GM12878 (cell line): ENCODE measurements at regions of chr6 and their contacts with region 1.

Region 1: DNA sequence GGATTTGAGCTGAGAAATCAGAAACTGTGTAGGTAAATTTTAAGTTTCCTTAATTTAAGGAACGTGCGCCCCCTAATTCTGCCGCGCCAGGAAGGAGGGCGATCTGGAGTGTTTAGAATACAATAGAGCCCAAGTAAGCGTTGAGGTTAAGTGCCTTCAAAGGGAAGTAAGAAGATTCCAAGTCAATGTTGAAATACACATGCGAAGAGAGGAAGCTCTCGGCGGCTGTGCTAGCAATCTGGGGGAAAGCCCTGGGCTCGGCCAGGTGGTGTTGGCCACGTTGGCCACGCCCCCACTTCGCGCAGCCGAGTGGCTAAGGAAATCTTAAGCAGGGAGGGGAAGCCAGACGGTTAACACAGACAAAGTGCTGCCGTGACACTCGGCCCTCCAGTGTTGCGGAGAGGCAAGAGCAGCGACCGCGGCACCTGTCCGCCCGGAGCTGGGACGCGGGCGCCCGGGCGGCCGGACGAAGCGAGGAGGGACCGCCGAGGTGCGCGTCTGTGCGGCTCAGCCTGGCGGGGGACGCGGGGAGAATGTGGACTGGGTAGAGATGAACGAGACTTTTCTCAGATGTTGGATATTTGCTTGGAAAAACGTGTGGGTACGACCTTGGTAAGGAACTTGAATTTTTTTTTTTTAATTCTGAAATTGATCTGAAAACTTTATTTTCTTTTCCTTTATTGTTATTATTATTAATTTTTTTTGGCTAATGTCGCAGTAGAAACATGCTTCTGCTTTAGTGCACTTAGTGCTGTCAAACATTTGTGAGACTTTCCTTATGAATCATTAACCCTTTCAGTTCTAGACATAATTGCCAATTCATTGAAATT is at the start of gene PRDM1:
- DNase-seq: peak; percentile 78
- ATAC-seq: peak; percentile 77
- H3K4me3 ChIP-seq: peak within 1 kb of the TSS; percentile 70
- H3K27ac ChIP-seq: peak within 1 kb of the TSS; percentile 78
- H3K4me1 ChIP-seq: peaks cover 23% of the 10 kb centered on the region
- H3K27me3 ChIP-seq: peaks cover 0 to under 1% of the 10 kb centered on the region in 2 experiments; a peak in 2 of 4 replicates
- CTCF ChIP-seq: peak; percentile 35 to 41 (median 41); a peak in 4 of 6 replicates
- EP300 ChIP-seq: no peak
- POLR2A ChIP-seq: peak; percentile 82
- RAD21 ChIP-seq: peak; percentile 38
- polyA plus RNA-seq, gene PRDM1: 1.9 to 2.8 TPM

Region 2: GRCh38 chr6:105492706-105493673 is 593.2 kb before region 1 on chr6:
- CTCF ChIA-PET with region 1: interaction called, 5 read pairs
- POLR2A ChIA-PET with region 1: no interaction called
- RAD21 ChIA-PET with region 1: interaction called, 7 read pairs
- SMC1A ChIA-PET with region 1: interaction called, 7 read pairs
- in situ Hi-C with region 1: loop called (anchors 5 kb)
- intact Hi-C with region 1: no loop called
- DNase-seq: no peak
- ATAC-seq: peak; percentile 83
- H3K4me3 ChIP-seq: no peak overlapping the region
- H3K27ac ChIP-seq: peak overlapping the region; percentile 27
- H3K4me1 ChIP-seq: peaks cover 47% of the 10 kb centered on the region
- H3K27me3 ChIP-seq: no peaks in the 10 kb centered on the region
- CTCF ChIP-seq: no peak
- EP300 ChIP-seq: no peak; a peak in 1 of 4 replicates
- POLR2A ChIP-seq: no peak
- RAD21 ChIP-seq: no peak

Region 3: DNA sequence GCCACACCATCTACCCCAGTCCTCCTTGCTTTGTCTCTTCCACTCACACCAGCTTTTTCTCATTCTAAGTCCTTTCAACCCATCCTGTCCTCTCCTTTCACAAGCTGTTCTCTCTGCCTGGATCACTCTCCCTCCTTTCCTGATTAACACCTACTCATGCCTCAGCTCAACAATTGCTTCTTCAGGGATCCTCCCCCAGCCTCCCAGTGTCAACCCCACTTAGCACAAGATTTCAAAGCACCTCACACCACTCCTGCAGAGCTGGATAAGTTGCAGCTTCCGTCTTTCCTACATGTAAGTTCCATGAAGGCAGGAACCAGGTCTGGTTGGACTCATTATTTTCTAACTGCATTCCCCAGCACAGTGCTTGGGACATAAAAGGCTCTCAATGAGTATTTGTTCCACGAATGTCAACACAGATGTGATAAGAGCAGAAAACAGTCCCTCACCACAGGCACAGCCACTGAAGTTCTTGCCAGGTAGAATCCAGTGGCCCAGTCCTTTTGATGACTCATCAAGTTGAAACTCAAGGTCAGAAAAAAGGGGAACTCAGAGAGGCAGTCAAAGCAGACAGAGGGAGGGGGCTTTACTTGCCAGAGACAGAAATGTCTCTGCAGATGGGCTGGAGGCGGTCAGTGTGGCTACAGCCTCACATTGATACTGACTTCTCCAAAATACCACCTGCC is 193.5 kb before region 1 on chr6:
- CTCF ChIA-PET with region 1: no interaction called
- POLR2A ChIA-PET with region 1: no interaction called
- RAD21 ChIA-PET with region 1: interaction called, 6 read pairs
- SMC1A ChIA-PET with region 1: interaction called, 6 read pairs
- in situ Hi-C with region 1: no loop called
- intact Hi-C with region 1: loop called (anchors 10 kb)
- DNase-seq: peak; percentile 74
- ATAC-seq: peak; percentile 97
- H3K4me3 ChIP-seq: no peak overlapping the region
- H3K27ac ChIP-seq: no peak overlapping the region; the same call in 1 of the 2 replicates
- H3K4me1 ChIP-seq: peaks cover 12% of the 10 kb centered on the region
- H3K27me3 ChIP-seq: no peaks in the 10 kb centered on the region; a peak in 1 of 4 replicates
- CTCF ChIP-seq: no peak
- EP300 ChIP-seq: peak; percentile 66 to 85; a peak in 3 of 4 replicates
- POLR2A ChIP-seq: no peak
- RAD21 ChIP-seq: no peak

Region 4: GRCh38 chr6:105967917-105968584 is 118.1 kb before region 1 on chr6:
- CTCF ChIA-PET with region 1: no interaction called
- POLR2A ChIA-PET with region 1: no interaction called
- RAD21 ChIA-PET with region 1: no interaction called
- SMC1A ChIA-PET with region 1: no interaction called
- in situ Hi-C with region 1: no loop called
- intact Hi-C with region 1: no loop called
- DNase-seq: no peak
- ATAC-seq: no peak
- H3K4me3 ChIP-seq: no peak overlapping the region
- H3K27ac ChIP-seq: no peak overlapping the region
- H3K4me1 ChIP-seq: no peaks in the 10 kb centered on the region
- H3K27me3 ChIP-seq: no peaks in the 10 kb centered on the region
- CTCF ChIP-seq: no peak
- EP300 ChIP-seq: no peak
- POLR2A ChIP-seq: no peak
- RAD21 ChIP-seq: no peak

Region 5: GRCh38 chr6:106141441-106142237 is 55.4 kb after region 1 on chr6:
- CTCF ChIA-PET with region 1: interaction called, 4 read pairs
- POLR2A ChIA-PET with region 1: interaction called, 3 read pairs
- RAD21 ChIA-PET with region 1: interaction called, 22 read pairs
- SMC1A ChIA-PET with region 1: interaction called, 34 read pairs
- in situ Hi-C with region 1: no loop called
- intact Hi-C with region 1: no loop called
- DNase-seq: peak; percentile 85
- ATAC-seq: peak; percentile 76
- H3K4me3 ChIP-seq: no peak overlapping the region
- H3K27ac ChIP-seq: peak overlapping the region; percentile 91
- H3K4me1 ChIP-seq: peaks cover 63% of the 10 kb centered on the region
- H3K27me3 ChIP-seq: no peaks in the 10 kb centered on the region
- CTCF ChIP-seq: no peak
- EP300 ChIP-seq: peak in 1 of 2 experiments; percentile 77; a peak in 2 of 4 replicates
- POLR2A ChIP-seq: no peak
- RAD21 ChIP-seq: peak; percentile 46

Region 6: DNA sequence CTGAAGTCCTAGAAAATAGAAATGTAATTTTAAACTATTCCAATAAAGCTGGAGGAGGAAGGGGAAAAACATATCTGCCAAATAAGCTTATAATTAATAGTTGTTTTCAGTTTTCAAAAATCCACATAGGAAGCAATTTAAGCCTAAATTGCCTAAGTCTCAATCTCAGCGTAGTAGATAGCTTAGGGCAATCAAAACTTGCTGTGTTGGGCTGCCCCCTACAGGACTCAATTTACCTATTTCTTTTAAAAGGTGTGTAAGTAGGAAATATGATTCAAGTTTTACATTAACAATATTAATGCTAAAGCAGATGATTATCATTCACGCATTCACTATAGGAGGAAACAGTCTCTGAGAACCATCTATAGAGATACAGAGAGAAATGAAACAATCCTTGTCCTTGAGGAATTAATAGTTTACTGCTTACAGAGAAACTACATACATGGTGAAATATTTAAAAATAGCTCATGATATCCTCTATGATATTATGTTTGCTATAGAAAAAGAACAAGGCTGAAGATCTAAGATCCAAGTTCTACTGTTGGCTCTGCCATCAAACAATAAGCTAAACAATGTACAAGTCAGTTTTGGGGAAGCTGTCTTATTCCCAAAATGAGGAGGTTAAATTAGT is 137.2 kb after region 1 on chr6:
- CTCF ChIA-PET with region 1: interaction called, 169 read pairs
- POLR2A ChIA-PET with region 1: interaction called, 3 read pairs
- RAD21 ChIA-PET with region 1: interaction called, 144 read pairs
- SMC1A ChIA-PET with region 1: interaction called, 159 read pairs
- in situ Hi-C with region 1: loop called (anchors 10 kb)
- intact Hi-C with region 1: loop called (anchors 1 kb)
- DNase-seq: peak; percentile 52
- ATAC-seq: peak; percentile 91
- H3K4me3 ChIP-seq: no peak overlapping the region
- H3K27ac ChIP-seq: no peak overlapping the region
- H3K4me1 ChIP-seq: peaks cover 14% of the 10 kb centered on the region
- H3K27me3 ChIP-seq: no peaks in the 10 kb centered on the region
- CTCF ChIP-seq: peak; percentile 50 to 79 (median 53); a peak in 4 of 6 replicates
- EP300 ChIP-seq: no peak
- POLR2A ChIP-seq: no peak
- RAD21 ChIP-seq: peak; percentile 97

Region 7: GRCh38 chr6:106519460-106520394 is 433.5 kb after region 1 on chr6:
- CTCF ChIA-PET with region 1: no interaction called
- POLR2A ChIA-PET with region 1: no interaction called
- RAD21 ChIA-PET with region 1: no interaction called
- SMC1A ChIA-PET with region 1: interaction called, 3 read pairs
- in situ Hi-C with region 1: no loop called
- intact Hi-C with region 1: loop called (anchors 5 kb)
- DNase-seq: peak; percentile 89
- ATAC-seq: peak; percentile 66
- H3K4me3 ChIP-seq: peak overlapping the region; percentile 73
- H3K27ac ChIP-seq: peak overlapping the region; percentile 93
- H3K4me1 ChIP-seq: no peaks in the 10 kb centered on the region
- H3K27me3 ChIP-seq: no peaks in the 10 kb centered on the region
- CTCF ChIP-seq: no peak
- EP300 ChIP-seq: peak; percentile 61 to 72
- POLR2A ChIP-seq: peak; percentile 78
- RAD21 ChIP-seq: no peak